HepG2 (cell line): ENCODE measurements at regions of chr5 and their contacts with region 1.

Region 1: GRCh38 chr5:44225231-44226160 is 163.7 kb downstream of the FGF10 start:
- DNase-seq: no peak
- ATAC-seq: no peak
- H3K4me3 ChIP-seq: no peak overlapping the region
- H3K27ac ChIP-seq: no peak overlapping the region
- H3K4me1 ChIP-seq: no peaks in the 10 kb centered on the region
- H3K27me3 ChIP-seq: no peaks in the 10 kb centered on the region
- CTCF ChIP-seq: no peak
- EP300 ChIP-seq: no peak
- POLR2A ChIP-seq: no peak
- RAD21 ChIP-seq: no peak

Region 2: GRCh38 chr5:44022622-44023021 is 202.9 kb before region 1 on chr5:
- CTCF ChIA-PET with region 1: no interaction called
- POLR2A ChIA-PET with region 1: no interaction called
- in situ Hi-C with region 1: no loop called
- intact Hi-C with region 1: no loop called
- DNase-seq: no peak
- ATAC-seq: no peak
- H3K4me3 ChIP-seq: no peak overlapping the region
- H3K27ac ChIP-seq: no peak overlapping the region
- H3K4me1 ChIP-seq: no peaks in the 10 kb centered on the region
- H3K27me3 ChIP-seq: no peaks in the 10 kb centered on the region
- CTCF ChIP-seq: no peak
- EP300 ChIP-seq: no peak
- POLR2A ChIP-seq: no peak
- RAD21 ChIP-seq: no peak

Region 3: DNA sequence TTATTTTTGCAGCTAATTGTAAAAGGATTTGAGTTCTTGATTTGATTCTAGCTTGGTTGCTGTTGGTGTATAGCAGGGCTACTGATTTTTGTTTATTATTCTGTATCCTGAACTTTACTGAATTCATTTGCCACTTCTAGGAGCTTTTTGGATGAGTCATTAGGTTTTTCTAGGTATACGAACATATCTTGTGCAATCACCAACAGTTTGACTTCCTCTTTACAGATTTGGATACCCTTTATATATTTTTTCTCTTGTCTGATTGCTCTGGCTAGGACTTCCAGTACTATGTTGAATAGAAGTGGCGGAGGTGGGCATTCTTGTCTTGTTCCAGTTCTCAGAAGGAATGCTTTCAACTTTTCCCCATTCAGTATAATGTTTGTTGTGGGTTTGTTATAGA is 47.1 kb before region 1 on chr5:
- CTCF ChIA-PET with region 1: no interaction called
- POLR2A ChIA-PET with region 1: no interaction called
- in situ Hi-C with region 1: no loop called
- intact Hi-C with region 1: no loop called
- DNase-seq: no peak
- ATAC-seq: no peak
- H3K4me3 ChIP-seq: no peak overlapping the region
- H3K27ac ChIP-seq: no peak overlapping the region
- H3K4me1 ChIP-seq: no peaks in the 10 kb centered on the region
- H3K27me3 ChIP-seq: no peaks in the 10 kb centered on the region; a peak in 1 of 5 replicates
- CTCF ChIP-seq: no peak
- EP300 ChIP-seq: no peak
- POLR2A ChIP-seq: no peak
- RAD21 ChIP-seq: no peak

Region 4: DNA sequence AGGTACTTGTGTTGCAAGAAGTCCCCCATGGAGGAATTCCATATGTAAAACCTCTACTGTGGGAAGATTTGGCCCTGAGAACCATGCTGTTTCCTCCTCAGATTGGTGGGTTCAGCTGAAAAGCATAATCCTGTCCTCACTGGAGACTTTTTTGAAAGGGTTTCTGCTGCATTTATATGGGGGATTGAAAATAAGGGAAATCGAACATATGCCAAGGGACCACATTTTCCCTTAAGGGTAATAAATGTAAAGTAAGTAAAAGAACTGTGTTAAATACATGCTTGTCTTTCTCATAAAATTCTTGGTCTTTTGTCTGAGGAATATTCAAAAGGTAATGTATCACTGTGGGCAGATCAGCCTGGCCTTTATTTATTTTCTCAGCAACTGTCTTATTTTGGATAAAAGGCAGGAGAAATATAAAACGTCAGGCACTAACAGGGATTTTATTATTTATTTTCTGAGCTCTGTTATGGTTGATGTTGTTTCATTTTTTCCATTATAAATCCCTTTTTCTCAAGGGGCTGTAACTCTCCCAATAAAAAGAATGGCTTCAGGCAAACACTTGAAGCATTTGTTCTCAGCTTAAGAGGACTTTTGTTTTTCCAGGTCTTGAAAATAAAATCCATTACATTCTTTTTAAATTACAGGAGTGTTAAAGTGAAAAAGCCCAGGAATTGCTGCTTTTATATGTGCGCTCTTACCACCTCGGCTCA is 32.3 kb after region 1 on chr5:
- CTCF ChIA-PET with region 1: no interaction called
- POLR2A ChIA-PET with region 1: no interaction called
- in situ Hi-C with region 1: no loop called
- intact Hi-C with region 1: loop called (anchors 1 kb)
- DNase-seq: no peak
- ATAC-seq: no peak
- H3K4me3 ChIP-seq: no peak overlapping the region
- H3K27ac ChIP-seq: no peak overlapping the region
- H3K4me1 ChIP-seq: no peaks in the 10 kb centered on the region
- H3K27me3 ChIP-seq: no peaks in the 10 kb centered on the region
- CTCF ChIP-seq: no peak
- EP300 ChIP-seq: no peak
- POLR2A ChIP-seq: no peak
- RAD21 ChIP-seq: no peak

Region 5: GRCh38 chr5:44952376-44952775 is 726.9 kb after region 1 on chr5:
- CTCF ChIA-PET with region 1: no interaction called
- POLR2A ChIA-PET with region 1: no interaction called
- in situ Hi-C with region 1: no loop called
- intact Hi-C with region 1: no loop called
- DNase-seq: peak; percentile 18
- ATAC-seq: peak; percentile 51; the same call in 2 of the 3 replicates
- H3K4me3 ChIP-seq: no peak overlapping the region
- H3K27ac ChIP-seq: no peak overlapping the region
- H3K4me1 ChIP-seq: no peaks in the 10 kb centered on the region
- H3K27me3 ChIP-seq: no peaks in the 10 kb centered on the region
- CTCF ChIP-seq: peak; percentile 31
- EP300 ChIP-seq: no peak
- POLR2A ChIP-seq: no peak
- RAD21 ChIP-seq: no peak